Activated CD8-positive, alpha-beta memory T cell treated with anti-CD3 and anti-CD28 coated beads, Interleukin-2, amount 10 ng/mL, durations not matched to agents 7 days and 5 days (primary cell): ENCODE measurements at regions of chr11 and their contacts with region 1.

Region 1: DNA sequence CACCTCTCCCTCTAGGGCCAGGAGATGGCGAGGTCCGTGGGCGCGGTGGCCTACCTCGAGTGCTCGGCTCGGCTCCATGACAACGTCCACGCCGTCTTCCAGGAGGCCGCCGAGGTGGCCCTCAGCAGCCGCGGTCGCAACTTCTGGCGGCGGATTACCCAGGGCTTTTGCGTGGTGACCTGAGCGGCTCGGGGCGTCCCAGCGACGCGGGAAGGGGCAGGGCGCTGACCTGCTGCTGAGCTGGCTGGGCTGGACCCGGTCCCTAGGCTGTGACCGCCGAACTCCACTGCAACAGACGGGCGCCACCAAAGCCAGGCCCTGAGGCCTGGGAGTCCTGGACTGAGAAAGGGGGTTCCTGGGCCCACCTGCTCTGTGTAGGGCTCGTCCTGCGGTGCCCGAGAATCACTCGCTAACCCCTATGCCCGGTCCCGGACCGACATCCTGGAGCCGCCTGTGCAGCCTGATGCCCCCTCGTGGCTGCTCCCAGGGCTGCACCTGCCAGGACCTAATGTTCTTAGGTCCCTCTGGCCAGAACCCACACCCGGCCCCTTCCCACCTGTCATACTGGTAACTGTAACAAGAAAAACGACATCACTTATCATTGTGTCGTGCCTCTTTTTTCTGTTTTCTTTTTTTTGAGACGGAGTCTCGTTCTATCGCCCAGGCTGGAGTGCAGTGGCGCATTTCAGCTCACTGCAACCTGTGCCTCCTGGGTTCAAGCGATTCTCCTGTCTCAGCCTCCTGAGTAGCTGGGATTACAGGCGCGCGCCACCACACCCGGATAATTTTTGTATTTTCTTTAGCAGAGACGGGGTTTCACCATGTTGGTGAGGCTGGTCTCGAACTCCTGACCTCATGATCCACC is 15.0 kb downstream of the RHOD start:
- DNase-seq: peak; percentile 85
- ATAC-seq: peak; percentile 95
- H3K4me3 Mint-ChIP-seq: no peak overlapping the region
- H3K27ac Mint-ChIP-seq: no peak overlapping the region
- H3K4me1 Mint-ChIP-seq: no peaks in the 10 kb centered on the region
- H3K27me3 Mint-ChIP-seq: no peaks in the 10 kb centered on the region

Region 2: DNA sequence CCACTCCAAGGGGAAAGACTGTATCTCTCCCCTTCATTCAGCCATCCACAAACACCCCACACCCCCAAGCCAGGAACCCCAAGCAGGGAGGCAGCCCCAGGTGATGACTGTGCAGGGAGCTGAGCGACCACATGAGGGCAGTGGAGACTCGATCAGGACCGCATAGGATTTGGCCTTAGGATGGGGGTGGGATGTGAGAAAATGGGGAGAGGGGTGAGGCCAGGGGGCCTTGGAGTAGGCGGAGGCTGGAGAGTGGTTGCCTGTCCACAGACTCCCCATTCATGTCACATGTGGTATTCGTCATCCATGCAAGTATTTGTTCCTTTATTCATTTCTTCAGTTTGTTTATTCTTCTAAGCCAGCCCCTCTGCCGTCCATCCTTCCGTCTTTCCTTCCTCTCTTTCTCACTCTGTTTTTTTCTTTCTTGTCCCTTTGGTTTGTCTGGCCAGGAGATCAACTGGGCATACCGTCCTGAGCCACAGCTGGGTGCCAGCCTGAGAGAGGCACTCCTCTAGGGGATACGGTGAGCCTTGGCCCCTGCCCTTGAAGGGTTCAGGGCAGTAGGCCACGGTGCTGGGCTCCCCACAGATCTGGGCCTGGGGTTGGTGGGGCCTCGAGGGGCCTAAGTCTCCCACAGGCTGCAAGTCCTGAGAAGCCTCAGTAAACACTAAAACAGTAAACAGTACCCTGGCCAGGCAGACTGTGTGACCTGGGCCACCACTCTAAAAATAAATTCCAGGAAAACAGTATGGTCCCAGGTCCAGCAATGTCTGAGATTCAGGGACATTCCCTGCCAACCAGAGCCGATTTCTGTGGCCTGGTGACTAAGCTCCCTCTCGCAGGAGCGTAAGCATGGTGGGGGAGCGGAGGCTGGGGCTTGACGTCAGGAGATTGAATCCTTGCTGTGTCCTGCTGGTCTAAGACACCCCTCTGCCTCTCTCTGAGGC is 17.5 kb before region 1 on chr11:
- CTCF ChIA-PET with region 1: interaction called, 41 read pairs
- DNase-seq: peak; percentile 67
- ATAC-seq: peak; percentile 58
- H3K4me3 Mint-ChIP-seq: no peak overlapping the region
- H3K27ac Mint-ChIP-seq: no peak overlapping the region
- H3K4me1 Mint-ChIP-seq: peaks cover 10% of the 10 kb centered on the region
- H3K27me3 Mint-ChIP-seq: peaks cover 6% of the 10 kb centered on the region

Region 3: GRCh38 chr11:67082035-67082791 is 10.6 kb after region 1 on chr11:
- CTCF ChIA-PET with region 1: interaction called, 18 read pairs
- DNase-seq: no peak
- ATAC-seq: no peak
- H3K4me3 Mint-ChIP-seq: no peak overlapping the region
- H3K27ac Mint-ChIP-seq: no peak overlapping the region
- H3K4me1 Mint-ChIP-seq: peaks cover 21% of the 10 kb centered on the region
- H3K27me3 Mint-ChIP-seq: no peaks in the 10 kb centered on the region